Adrenal gland (tissue), 19 donors: ENCODE measurements at regions of chr20 and their contacts with region 1.

Region 1: DNA sequence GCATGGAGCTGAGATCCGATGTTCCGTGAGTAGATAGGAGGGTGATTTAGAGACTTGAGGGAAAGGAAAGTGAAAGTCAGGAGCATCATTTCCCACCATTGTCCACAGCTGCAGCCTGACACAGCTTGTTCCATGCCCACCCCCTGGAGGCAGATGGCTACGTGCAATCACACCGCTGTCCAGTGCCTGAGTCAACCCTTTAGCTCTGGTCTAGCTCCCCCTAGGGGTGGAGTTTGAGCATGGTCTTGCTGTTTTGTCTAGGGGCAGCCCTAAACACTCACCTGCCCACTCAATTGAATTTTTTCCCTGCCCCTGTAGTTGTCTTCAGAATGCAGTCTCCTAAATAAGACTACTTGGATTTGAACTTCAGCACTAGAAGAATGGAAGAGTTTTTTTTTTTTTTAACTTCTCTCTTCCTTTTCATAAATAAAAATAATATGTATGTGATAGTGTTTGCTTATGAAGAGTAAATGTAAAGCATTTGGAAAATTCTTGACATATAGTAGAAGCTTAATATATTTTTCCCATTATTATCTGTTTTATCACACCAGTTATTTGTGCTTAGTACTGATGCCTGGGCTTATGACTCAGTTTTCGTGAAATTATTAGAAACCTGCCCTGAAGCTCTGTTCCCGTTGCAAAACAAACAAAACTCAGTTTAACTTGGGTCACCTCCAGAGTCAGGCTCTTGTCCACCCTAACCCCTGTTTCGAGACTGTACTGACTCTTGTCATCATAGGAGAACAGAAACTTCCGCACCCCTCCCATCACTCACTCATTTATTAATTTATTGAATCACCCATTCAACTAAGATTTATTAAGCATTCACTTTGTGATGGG is 814.8 kb downstream of the MAFB start:
- DNase-seq: peak; percentile 87 to 95 (median 92)
- H3K4me3 ChIP-seq: no peak overlapping the region
- H3K27ac ChIP-seq: no peak overlapping the region
- H3K4me1 ChIP-seq: peaks cover 4 to 10% of the 10 kb centered on the region in 2 donors
- H3K27me3 ChIP-seq: no peaks in the 10 kb centered on the region
- CTCF ChIP-seq: peak; percentile 91 to 97 (median 94)
- POLR2A ChIP-seq: no peak

Region 2: GRCh38 chr20:39112178-39112743 is 762.0 kb before region 1 on chr20:
- intact Hi-C with region 1: loop called in 1 of 2 experiments (anchors 10 kb)
- DNase-seq: peak; percentile 38 to 88 (median 63)
- H3K4me3 ChIP-seq: no peak overlapping the region
- H3K27ac ChIP-seq: no peak overlapping the region
- H3K4me1 ChIP-seq: peaks cover 6 to 8% of the 10 kb centered on the region in 2 donors
- H3K27me3 ChIP-seq: peaks cover 3% of the 10 kb centered on the region
- CTCF ChIP-seq: peak; percentile 39 to 83 (median 66)
- POLR2A ChIP-seq: no peak

Region 3: DNA sequence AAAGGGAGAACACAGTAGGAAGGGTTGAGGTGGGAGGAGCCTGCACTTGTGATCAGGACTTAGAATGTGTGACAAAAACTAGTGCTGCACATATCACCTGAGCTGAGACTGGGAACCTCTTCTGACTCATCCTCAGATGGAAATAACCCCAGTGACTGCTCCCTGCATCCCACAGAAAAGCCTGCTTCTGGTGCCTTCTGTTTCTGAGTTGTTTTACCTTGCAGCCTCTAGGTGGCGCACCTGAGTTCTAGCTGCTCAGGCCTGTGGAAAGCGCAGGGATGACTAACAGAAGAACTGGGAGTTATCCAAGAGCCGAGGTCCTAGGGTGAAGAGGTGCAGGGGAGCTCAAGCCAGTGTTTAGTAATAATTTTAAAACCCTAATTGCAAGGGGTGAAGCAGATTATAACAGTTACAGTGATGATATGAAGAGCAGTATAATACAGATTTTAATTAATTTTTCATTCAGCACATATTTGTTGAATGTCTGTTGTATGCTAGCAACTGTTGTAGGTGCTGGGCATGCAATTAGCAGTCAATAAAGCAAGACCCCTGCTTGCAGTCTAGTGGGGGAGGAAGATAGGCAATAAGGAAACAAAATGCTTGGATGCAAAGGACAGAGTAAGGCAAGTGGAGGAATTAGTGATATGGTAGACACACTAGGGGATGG is 609.6 kb before region 1 on chr20:
- intact Hi-C with region 1: loop called in 1 of 2 experiments (anchors 5 kb)
- DNase-seq: peak; percentile 68 to 90 (median 82)
- H3K4me3 ChIP-seq: no peak overlapping the region
- H3K27ac ChIP-seq: no peak overlapping the region
- H3K4me1 ChIP-seq: peaks cover 0 to 4% of the 10 kb centered on the region in 2 donors
- H3K27me3 ChIP-seq: no peaks in the 10 kb centered on the region
- CTCF ChIP-seq: peak; percentile 68 to 92 (median 86)
- POLR2A ChIP-seq: no peak

Region 4: GRCh38 chr20:39429716-39430115 is 444.6 kb before region 1 on chr20:
- intact Hi-C with region 1: loop called in 1 of 2 experiments (anchors 10 kb)
- DNase-seq: peak; percentile 21 to 62 (median 42)
- H3K4me3 ChIP-seq: no peak overlapping the region
- H3K27ac ChIP-seq: no peak overlapping the region
- H3K4me1 ChIP-seq: no peaks in the 10 kb centered on the region
- H3K27me3 ChIP-seq: no peaks in the 10 kb centered on the region
- CTCF ChIP-seq: peak; percentile 30 to 62 (median 52)
- POLR2A ChIP-seq: no peak

Region 5: DNA sequence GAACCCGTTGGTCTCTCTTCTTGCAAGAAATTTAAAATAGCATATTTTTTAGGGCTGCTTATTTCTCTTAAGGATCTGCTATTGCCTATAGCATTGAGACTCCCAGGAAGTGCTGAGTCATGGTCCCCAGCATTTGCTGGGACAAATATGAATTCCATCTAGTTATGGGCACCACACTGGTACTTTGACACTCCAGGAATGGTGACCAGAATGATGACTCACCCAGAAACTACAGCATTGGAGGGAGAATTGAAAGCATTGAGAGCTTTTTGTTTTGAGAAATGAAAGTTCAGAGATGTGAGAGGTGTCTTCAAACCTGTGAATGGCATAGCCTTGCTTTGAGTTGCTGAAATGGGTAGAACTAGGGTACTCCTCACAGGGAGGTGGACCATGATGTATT is 212.4 kb before region 1 on chr20:
- intact Hi-C with region 1: loop called in 1 of 2 experiments (anchors 10 kb)
- DNase-seq: no peak
- H3K4me3 ChIP-seq: no peak overlapping the region
- H3K27ac ChIP-seq: no peak overlapping the region
- H3K4me1 ChIP-seq: no peaks in the 10 kb centered on the region
- H3K27me3 ChIP-seq: no peaks in the 10 kb centered on the region
- CTCF ChIP-seq: no peak
- POLR2A ChIP-seq: no peak

Region 6: GRCh38 chr20:40689943-40690835 is 815.9 kb after region 1 on chr20:
- intact Hi-C with region 1: loop called in 1 of 2 experiments (anchors 10 kb)
- DNase-seq: peak; percentile 90 to 97 (median 94)
- H3K4me3 ChIP-seq: peak overlapping the region in 3 of 4 donors; percentile 36 to 65 (median 37)
- H3K27ac ChIP-seq: peak overlapping the region; percentile 93 to 99 (median 98)
- H3K4me1 ChIP-seq: peaks cover 7 to 14% of the 10 kb centered on the region in 2 donors
- H3K27me3 ChIP-seq: peaks cover 27% of the 10 kb centered on the region
- CTCF ChIP-seq: peak; percentile 77 to 93 (median 92)
- POLR2A ChIP-seq: peak in 1 of 2 donors; percentile 26